Psoas muscle (tissue), 8 donors: ENCODE measurements at regions of chr9 and their contacts with region 1.

Region 1: GRCh38 chr9:7500521-7500920 is 299.1 kb downstream of the DMAC1 start:
- DNase-seq: no peak
- ATAC-seq: no peak
- H3K4me3 ChIP-seq: no peak overlapping the region
- H3K27ac ChIP-seq: no peak overlapping the region
- H3K4me1 ChIP-seq: no peaks in the 10 kb centered on the region
- H3K27me3 ChIP-seq: no peaks in the 10 kb centered on the region
- CTCF ChIP-seq: no peak

Region 2: GRCh38 chr9:7802666-7803065 is 302.1 kb after region 1 on chr9:
- intact Hi-C with region 1: no loop called
- DNase-seq: no peak
- ATAC-seq: no peak
- H3K4me3 ChIP-seq: no peak overlapping the region
- H3K27ac ChIP-seq: no peak overlapping the region
- H3K4me1 ChIP-seq: peaks cover 6% of the 10 kb centered on the region
- H3K27me3 ChIP-seq: peaks cover 0 to 2% (median 0%) of the 10 kb centered on the region in 3 donors
- CTCF ChIP-seq: no peak

Region 3: GRCh38 chr9:8115570-8115969 is 615.0 kb after region 1 on chr9:
- intact Hi-C with region 1: loop called in 1 of 2 experiments (anchors 10 kb)
- DNase-seq: no peak
- ATAC-seq: no peak
- H3K4me3 ChIP-seq: no peak overlapping the region
- H3K27ac ChIP-seq: no peak overlapping the region
- H3K4me1 ChIP-seq: no peaks in the 10 kb centered on the region
- H3K27me3 ChIP-seq: no peaks in the 10 kb centered on the region
- CTCF ChIP-seq: no peak